RWPE1 (cell line): ENCODE measurements at regions of chr3 and their contacts with region 1.

Region 1: GRCh38 chr3:45730409-45731154 is 41.4 kb downstream of the SACM1L start:
- DNase-seq: no peak
- H3K27ac ChIP-seq: no peak overlapping the region
- CTCF ChIP-seq: no peak

Region 2: GRCh38 chr3:45656575-45657363 is 73.8 kb before region 1 on chr3:
- CTCF ChIA-PET with region 1: no interaction called
- POLR2A ChIA-PET with region 1: interaction called, 11 read pairs
- DNase-seq: peak; percentile 85
- H3K27ac ChIP-seq: peak overlapping the region; percentile 53
- CTCF ChIP-seq: peak; percentile 89